Mammary epithelial cell (primary cell): ENCODE measurements at regions of chr3 and their contacts with region 1.

Region 1: DNA sequence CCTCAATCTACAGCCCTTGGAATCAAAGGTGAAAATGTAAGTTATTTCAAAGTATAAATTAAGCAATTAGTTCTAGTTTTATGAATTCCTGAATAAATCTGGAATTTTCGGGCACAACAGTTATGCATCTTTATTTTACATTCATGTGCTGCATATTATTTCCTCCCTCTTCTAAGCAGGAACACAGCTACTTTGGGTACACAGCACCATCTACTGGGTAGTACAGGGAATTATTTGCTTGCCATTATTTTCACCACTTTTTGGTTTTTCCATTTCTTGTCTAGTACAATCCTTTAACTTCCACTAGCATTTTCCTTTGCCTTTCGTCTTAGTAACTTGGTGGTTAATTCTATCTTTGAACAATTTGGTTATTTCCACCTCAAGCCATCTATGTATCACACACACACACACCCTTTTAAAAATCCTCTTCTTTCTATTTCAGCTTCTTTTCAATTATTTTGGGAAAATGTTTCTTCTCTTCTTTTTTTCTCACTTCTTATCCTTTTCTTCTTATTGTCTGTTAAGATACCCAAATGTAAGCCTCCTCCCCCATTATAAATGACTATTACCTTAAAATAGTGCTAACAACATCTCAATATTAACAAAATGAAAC is 451.0 kb downstream of the MFSD1 start:
- DNase-seq: peak; percentile 48
- H3K4me3 ChIP-seq: no peak overlapping the region
- H3K27ac ChIP-seq: no peak overlapping the region
- H3K4me1 ChIP-seq: no peaks in the 10 kb centered on the region
- H3K27me3 ChIP-seq: no peaks in the 10 kb centered on the region
- CTCF ChIP-seq: peak; percentile 79 to 85

Region 2: DNA sequence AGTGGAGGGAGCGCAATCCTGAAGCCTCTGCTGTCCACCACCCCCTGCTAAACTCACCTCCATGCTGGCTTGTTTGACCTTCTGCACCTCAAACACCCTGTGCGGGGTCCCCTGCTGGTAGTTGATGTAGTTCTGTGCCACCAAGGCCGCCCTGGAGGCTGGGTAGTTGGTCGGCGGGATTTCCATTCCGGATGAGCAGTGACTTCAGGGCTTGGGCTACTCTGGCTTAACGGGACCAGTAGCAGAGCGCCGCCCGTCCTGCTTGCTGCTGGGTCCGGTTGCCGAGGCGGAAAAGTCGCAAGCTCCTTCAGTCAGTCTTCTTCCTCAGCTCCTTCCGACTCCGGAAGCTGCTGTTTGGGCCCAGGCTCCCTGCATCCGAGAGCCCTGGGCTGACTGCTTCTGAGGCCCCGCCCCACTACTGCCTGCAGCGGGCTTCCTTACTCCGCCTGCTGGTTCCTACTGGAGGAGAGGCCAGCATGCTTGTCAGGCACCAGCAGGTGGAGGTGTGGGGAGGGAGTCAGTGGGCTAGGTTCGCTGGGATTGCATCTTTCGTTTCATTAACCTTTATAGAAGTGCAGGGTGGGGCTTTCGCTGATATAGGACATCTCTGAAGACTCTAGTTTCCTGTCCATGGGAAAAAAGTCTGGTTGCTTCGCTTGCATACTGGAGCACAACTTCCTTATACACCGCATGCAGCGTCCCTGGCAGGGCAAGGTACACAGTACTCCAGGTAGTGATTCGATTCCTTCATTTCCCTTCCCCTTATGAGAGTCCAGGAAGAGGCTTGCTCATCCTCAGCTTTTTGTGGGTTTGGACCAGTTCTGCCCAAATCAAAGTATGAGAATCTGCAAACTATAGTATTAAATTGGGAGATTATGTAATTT is 580.3 kb before region 1 on chr3 and contains the start of gene LXN:
- CTCF ChIA-PET with region 1: no interaction called
- dilution Hi-C with region 1: no loop called
- in situ Hi-C with region 1: no loop called
- intact Hi-C with region 1: loop called (anchors 10 kb)
- DNase-seq: peak; percentile 89
- H3K4me3 ChIP-seq: peak within 1 kb of the TSS; percentile 44 to 65 (median 57)
- H3K27ac ChIP-seq: peak within 1 kb of the TSS; percentile 24
- H3K4me1 ChIP-seq: peaks cover 11% of the 10 kb centered on the region
- H3K27me3 ChIP-seq: no peaks in the 10 kb centered on the region
- CTCF ChIP-seq: peak; percentile 64 to 94
- total RNA-seq, gene LXN: 6.4 to 9.2 TPM

Region 3: GRCh38 chr3:158845765-158846350 is 407.0 kb before region 1 on chr3:
- CTCF ChIA-PET with region 1: interaction called, 3 read pairs
- dilution Hi-C with region 1: loop called (anchors 25 kb)
- in situ Hi-C with region 1: loop called (anchors 5 to 10 kb)
- intact Hi-C with region 1: loop called (anchors 2 kb)
- DNase-seq: no peak
- H3K4me3 ChIP-seq: no peak overlapping the region
- H3K27ac ChIP-seq: no peak overlapping the region
- H3K4me1 ChIP-seq: no peaks in the 10 kb centered on the region
- H3K27me3 ChIP-seq: peaks cover 2% of the 10 kb centered on the region
- CTCF ChIP-seq: peak; percentile 52 to 69

Region 4: DNA sequence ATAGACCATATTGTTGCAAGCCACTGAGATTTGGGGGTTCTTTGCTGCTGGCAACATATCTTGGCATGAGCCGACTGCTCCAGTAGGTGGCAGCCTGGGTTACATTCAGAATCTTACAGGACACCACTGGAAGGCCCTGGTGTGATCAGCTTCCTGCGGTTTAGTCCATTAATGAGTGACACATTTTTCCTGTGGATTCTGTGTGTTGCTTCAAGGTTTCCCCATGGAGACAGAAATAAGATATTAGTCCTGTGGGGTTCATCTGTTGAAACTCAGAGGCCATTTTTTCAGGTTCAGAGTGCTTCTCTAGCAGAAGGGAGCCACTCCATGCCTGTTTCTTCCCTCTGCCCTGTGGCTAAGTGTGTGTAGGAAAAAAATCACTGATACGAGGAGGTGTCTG is 334.9 kb before region 1 on chr3:
- CTCF ChIA-PET with region 1: no interaction called
- dilution Hi-C with region 1: loop called (anchors 25 kb)
- in situ Hi-C with region 1: loop called in 1 of 2 experiments (anchors 5 kb)
- intact Hi-C with region 1: loop called (anchors 1 kb)
- DNase-seq: peak; percentile 61
- H3K4me3 ChIP-seq: no peak overlapping the region
- H3K27ac ChIP-seq: no peak overlapping the region
- H3K4me1 ChIP-seq: no peaks in the 10 kb centered on the region
- H3K27me3 ChIP-seq: no peaks in the 10 kb centered on the region
- CTCF ChIP-seq: peak; percentile 82 to 84

Region 5: GRCh38 chr3:159130108-159130507 is 122.8 kb before region 1 on chr3:
- CTCF ChIA-PET with region 1: no interaction called
- dilution Hi-C with region 1: no loop called
- in situ Hi-C with region 1: no loop called
- intact Hi-C with region 1: loop called (anchors 1 kb)
- DNase-seq: no peak
- H3K4me3 ChIP-seq: no peak overlapping the region
- H3K27ac ChIP-seq: no peak overlapping the region
- H3K4me1 ChIP-seq: peaks cover 30% of the 10 kb centered on the region
- H3K27me3 ChIP-seq: no peaks in the 10 kb centered on the region
- CTCF ChIP-seq: peak; percentile 26 to 41

Region 6: DNA sequence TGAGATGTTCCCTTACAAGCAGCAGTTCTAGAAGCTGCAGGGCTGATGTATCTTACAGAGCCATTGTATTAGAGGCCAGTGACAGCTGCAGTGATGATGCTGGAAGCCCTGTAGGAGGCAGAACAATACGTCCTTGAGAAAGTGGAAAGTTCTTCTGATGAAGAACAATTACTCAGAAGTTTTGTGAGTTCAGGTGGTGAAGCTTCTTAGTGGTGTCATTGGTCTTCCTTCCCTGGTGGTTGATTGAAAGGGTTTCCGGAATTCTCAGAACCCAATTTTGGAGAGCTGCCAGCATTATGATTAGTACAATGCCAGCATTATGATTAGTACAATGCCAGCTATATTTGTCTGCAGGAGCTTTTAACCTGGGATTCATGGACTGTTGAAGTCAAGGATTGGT is 94.7 kb before region 1 on chr3:
- CTCF ChIA-PET with region 1: no interaction called
- dilution Hi-C with region 1: no loop called
- in situ Hi-C with region 1: no loop called
- intact Hi-C with region 1: loop called (anchors 2 kb)
- DNase-seq: peak; percentile 95
- H3K4me3 ChIP-seq: no peak overlapping the region
- H3K27ac ChIP-seq: no peak overlapping the region
- H3K4me1 ChIP-seq: peaks cover 12% of the 10 kb centered on the region
- H3K27me3 ChIP-seq: no peaks in the 10 kb centered on the region
- CTCF ChIP-seq: peak; percentile 43